Activated CD4-positive, alpha-beta memory T cell treated with anti-CD3 and anti-CD28 coated beads, Interleukin-2, amount 10 ng/mL, durations not matched to agents 7 days and 5 days (primary cell): ENCODE measurements at regions of chr16 and their contacts with region 1.

Region 1: GRCh38 chr16:18801197-18801972 is at the start of gene ARL6IP1:
- DNase-seq: peak; percentile 99
- H3K4me3 Mint-ChIP-seq: peak within 1 kb of the TSS; percentile 96
- H3K27ac Mint-ChIP-seq: peak within 1 kb of the TSS; percentile 98
- H3K4me1 Mint-ChIP-seq: peaks cover 81% of the 10 kb centered on the region
- H3K27me3 Mint-ChIP-seq: no peaks in the 10 kb centered on the region
- total RNA-seq, gene ARL6IP1: 264 to 277 TPM

Region 2: DNA sequence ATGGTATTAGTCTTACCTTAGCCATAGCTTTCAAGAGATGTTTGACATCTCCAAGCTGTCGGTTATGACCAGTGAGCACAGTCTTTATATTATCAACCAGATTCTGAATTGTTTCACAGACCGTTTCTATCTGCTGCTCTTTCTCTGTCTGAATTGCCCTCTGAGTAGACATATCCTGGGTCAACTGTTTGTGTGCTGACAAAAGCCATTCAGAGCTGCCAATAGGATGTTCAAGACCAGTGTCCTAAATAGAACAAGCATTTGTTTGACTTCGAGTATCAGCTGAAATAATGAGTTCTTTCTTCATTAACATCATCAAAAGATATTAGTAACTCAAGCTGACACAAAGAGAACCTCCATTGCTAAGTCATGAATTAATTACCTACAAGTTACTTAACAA is 14.9 kb after region 1 on chr16:
- CTCF ChIA-PET with region 1: interaction called, 100 read pairs
- POLR2A ChIA-PET with region 1: interaction called, 29 read pairs
- DNase-seq: no peak
- H3K4me3 Mint-ChIP-seq: no peak overlapping the region
- H3K27ac Mint-ChIP-seq: no peak overlapping the region
- H3K4me1 Mint-ChIP-seq: peaks cover 15% of the 10 kb centered on the region
- H3K27me3 Mint-ChIP-seq: no peaks in the 10 kb centered on the region

Region 3: DNA sequence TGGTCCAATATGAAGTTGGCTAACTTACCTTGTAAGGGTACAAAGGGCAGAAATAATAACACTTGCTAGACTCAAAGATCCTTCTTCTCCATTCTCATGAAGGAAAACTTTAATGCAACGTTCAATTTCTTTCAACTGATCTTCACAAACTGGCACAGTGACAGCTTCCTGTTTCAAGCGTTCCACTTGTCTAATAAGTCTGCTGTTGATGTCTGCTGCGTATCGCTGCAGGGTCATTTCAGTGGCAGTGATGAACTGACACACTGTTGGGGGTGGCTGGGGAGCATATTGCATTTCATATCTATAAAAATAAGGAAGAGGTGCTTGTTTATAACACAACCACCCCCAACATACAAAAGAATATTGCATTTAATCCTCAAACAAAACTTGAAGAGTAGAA is 33.5 kb after region 1 on chr16:
- CTCF ChIA-PET with region 1: interaction called, 23 read pairs
- POLR2A ChIA-PET with region 1: interaction called, 27 read pairs
- DNase-seq: no peak
- H3K4me3 Mint-ChIP-seq: no peak overlapping the region
- H3K27ac Mint-ChIP-seq: no peak overlapping the region
- H3K4me1 Mint-ChIP-seq: peaks cover 14% of the 10 kb centered on the region
- H3K27me3 Mint-ChIP-seq: no peaks in the 10 kb centered on the region

Region 4: GRCh38 chr16:18932243-18932981 is 131.0 kb after region 1 on chr16:
- CTCF ChIA-PET with region 1: interaction called, 3 read pairs
- POLR2A ChIA-PET with region 1: interaction called, 32 read pairs
- DNase-seq: no peak
- H3K4me3 Mint-ChIP-seq: no peak overlapping the region
- H3K27ac Mint-ChIP-seq: no peak overlapping the region
- H3K4me1 Mint-ChIP-seq: peaks cover 12% of the 10 kb centered on the region
- H3K27me3 Mint-ChIP-seq: no peaks in the 10 kb centered on the region

Region 5: DNA sequence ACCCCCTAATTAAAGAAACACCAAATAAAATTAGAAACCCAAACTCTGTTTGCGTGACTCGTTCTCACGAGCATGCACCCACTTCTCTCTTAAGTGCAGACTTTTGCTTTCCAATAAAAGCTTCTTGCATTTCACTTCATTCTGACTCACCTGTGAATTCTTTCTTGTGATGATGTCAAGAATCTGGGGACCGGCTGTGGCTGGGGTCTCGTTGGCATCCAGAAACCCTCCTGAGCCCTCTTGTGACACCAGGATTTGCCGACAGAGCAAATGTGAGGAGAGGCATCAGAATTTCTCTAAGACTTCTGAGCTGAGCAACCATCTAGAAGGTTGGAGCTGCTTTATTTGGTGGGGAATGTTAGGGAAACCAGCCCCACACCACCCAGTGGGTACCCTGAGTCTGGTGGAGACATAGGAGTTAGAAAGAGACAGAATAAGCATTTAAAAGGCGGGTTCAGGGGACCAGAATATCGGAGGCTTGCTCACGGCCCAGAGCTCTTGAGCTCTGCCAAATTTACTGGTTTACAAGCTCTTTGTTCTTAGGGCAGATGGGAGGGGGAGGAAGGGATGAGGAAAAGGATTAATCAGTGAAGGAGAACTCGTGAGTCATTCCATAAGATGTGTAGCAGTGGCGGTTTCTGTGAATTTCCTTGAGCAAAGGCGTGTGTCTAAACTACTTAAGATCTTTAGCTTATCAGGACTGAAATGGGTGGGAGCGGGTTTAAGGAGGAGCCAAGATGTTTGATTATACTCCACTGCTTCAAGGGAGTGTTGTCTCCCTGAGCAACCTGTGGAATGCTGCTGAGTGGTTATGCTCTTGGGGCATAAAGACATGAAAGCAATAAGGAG is 592.1 kb after region 1 on chr16:
- CTCF ChIA-PET with region 1: no interaction called
- POLR2A ChIA-PET with region 1: no interaction called
- DNase-seq: no peak
- H3K4me3 Mint-ChIP-seq: no peak overlapping the region
- H3K27ac Mint-ChIP-seq: no peak overlapping the region
- H3K4me1 Mint-ChIP-seq: peaks cover 11% of the 10 kb centered on the region
- H3K27me3 Mint-ChIP-seq: peaks cover 37% of the 10 kb centered on the region